ENCODE measurements at regions of chr16 and their contacts with region 1.

Region 1: GRCh38 chr16:30355144-30355894 is at the start of gene CD2BP2:
- DNase-seq: peak; percentile 100
- H3K4me3 ChIP-seq: peak within 1 kb of the TSS; percentile 91 to 97 (median 95)
- H3K27ac ChIP-seq: peak within 1 kb of the TSS; percentile 84
- H3K4me1 ChIP-seq: peaks cover 17% of the 10 kb centered on the region
- H3K27me3 ChIP-seq: no peaks in the 10 kb centered on the region
- CTCF ChIP-seq: no peak
- total RNA-seq, gene CD2BP2: 38.3 to 55.2 TPM

Region 2: DNA sequence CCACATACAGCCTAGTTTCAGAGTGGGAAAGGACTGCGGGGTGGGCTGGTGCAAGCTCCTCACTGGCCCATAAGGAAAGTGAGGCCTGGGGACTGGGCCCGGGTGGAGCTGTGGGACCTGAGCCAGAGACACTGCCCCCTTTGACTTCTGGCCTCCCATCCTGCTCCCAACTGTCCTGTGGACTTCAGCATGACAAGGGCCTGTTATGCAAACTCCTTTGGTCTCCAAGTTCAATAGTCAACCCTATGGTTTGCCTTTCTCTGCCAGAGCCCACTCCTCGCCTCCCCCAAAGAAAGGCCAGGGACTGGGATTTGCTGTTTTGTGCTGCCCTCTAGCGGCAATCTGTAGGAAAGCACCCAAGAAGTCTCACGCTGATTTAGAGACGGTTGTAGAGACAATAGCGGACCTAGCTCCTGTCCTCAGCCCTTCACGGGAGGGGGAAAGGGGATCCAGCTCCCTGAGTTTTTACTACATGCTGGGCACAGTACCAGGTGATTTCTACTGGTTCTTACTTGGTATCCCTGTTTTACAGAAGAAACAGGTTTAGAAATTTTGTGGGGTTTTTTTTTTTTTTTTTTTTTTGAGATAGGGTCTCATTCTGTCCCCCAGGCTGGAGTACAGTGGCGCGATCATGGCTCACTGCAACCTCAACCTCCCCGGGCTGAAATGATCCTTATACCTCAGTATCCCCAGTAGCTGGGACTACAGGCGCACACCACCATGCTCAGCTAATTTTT is 323.1 kb before region 1 on chr16:
- CTCF ChIA-PET with region 1: interaction called, 11 read pairs
- dilution Hi-C with region 1: no loop called
- in situ Hi-C with region 1: no loop called
- intact Hi-C with region 1: no loop called
- DNase-seq: peak; percentile 44
- H3K4me3 ChIP-seq: no peak overlapping the region
- H3K27ac ChIP-seq: no peak overlapping the region
- H3K4me1 ChIP-seq: no peaks in the 10 kb centered on the region
- H3K27me3 ChIP-seq: peaks cover 4% of the 10 kb centered on the region
- CTCF ChIP-seq: peak; percentile 68 to 80

Region 3: GRCh38 chr16:30335598-30336474 is 19.5 kb before region 1 on chr16:
- CTCF ChIA-PET with region 1: no interaction called
- dilution Hi-C with region 1: no loop called
- in situ Hi-C with region 1: no loop called
- intact Hi-C with region 1: loop called (anchors 1 kb)
- DNase-seq: peak; percentile 58
- H3K4me3 ChIP-seq: peak overlapping the region; percentile 56 to 84 (median 74)
- H3K27ac ChIP-seq: peak overlapping the region; percentile 34
- H3K4me1 ChIP-seq: peaks cover 4% of the 10 kb centered on the region
- H3K27me3 ChIP-seq: no peaks in the 10 kb centered on the region
- CTCF ChIP-seq: no peak

Region 4: GRCh38 chr16:30370444-30371247 is 15.3 kb after region 1 on chr16 and contains the start of gene TBC1D10B:
- CTCF ChIA-PET with region 1: no interaction called
- dilution Hi-C with region 1: no loop called
- in situ Hi-C with region 1: no loop called
- intact Hi-C with region 1: loop called (anchors 1 kb)
- DNase-seq: peak; percentile 100
- H3K4me3 ChIP-seq: peak within 1 kb of the TSS; percentile 74 to 79 (median 75)
- H3K27ac ChIP-seq: peak within 1 kb of the TSS; percentile 36
- H3K4me1 ChIP-seq: peaks cover 13% of the 10 kb centered on the region
- H3K27me3 ChIP-seq: no peaks in the 10 kb centered on the region
- CTCF ChIP-seq: peak in 1 of 2 donors; percentile 36
- total RNA-seq, gene TBC1D10B: 27.3 to 45.5 TPM

Region 5: GRCh38 chr16:30407102-30407803 is 51.9 kb after region 1 on chr16 and contains the start of gene ZNF771:
- CTCF ChIA-PET with region 1: no interaction called
- dilution Hi-C with region 1: no loop called
- in situ Hi-C with region 1: no loop called
- intact Hi-C with region 1: loop called (anchors 2 kb)
- DNase-seq: peak; percentile 83
- H3K4me3 ChIP-seq: peak within 1 kb of the TSS; percentile 48 to 82 (median 82)
- H3K27ac ChIP-seq: peak within 1 kb of the TSS; percentile 64
- H3K4me1 ChIP-seq: peaks cover 12% of the 10 kb centered on the region
- H3K27me3 ChIP-seq: no peaks in the 10 kb centered on the region
- CTCF ChIP-seq: peak in 1 of 2 donors; percentile 10
- total RNA-seq, gene ZNF771: 6.3 to 6.5 TPM

Measured in mammary epithelial cell (primary cell).